ENCODE measurements at regions of chr6 and their contacts with region 1.

Region 1: DNA sequence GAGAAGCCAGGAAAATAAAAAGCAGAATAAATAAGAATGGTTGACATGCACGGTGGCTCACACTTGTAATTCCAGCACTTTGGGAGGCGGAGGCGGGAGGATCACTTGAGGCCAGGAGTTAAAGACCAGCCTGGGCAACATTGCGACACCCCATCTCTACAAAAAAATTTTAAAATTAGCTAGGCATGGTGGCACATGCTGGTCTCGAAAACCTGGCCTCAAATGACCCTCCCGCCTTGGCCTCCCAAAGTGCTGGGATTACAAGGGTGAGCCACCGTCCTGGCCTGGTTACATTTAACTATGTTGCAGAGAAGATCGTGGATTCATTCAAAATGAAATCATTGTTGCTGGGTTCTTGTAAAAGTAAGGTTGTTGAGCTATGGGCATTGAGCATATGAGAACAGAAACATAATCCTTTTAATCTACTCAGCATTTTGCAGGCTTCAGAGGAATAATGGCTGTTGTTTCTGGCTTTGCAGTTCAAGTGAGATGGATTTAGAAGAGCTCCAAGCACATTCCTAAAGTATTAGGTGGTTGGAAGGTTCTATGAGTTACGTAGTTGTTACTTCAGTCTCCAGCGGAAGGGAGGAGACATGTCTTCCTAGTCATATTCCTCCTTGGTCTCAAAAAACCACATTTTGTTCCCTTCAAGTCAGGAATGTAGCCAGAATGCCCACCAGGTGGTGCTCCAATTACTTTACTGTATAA is 45.6 kb upstream of the RAB23 start:
- DNase-seq: peak; percentile 91
- H3K4me3 Mint-ChIP-seq: peak overlapping the region; percentile 45
- H3K27ac Mint-ChIP-seq: peak overlapping the region; percentile 66
- H3K4me1 Mint-ChIP-seq: peaks cover 16% of the 10 kb centered on the region
- H3K27me3 Mint-ChIP-seq: no peaks in the 10 kb centered on the region
- CTCF ChIP-seq: peak; percentile 49

Region 2: DNA sequence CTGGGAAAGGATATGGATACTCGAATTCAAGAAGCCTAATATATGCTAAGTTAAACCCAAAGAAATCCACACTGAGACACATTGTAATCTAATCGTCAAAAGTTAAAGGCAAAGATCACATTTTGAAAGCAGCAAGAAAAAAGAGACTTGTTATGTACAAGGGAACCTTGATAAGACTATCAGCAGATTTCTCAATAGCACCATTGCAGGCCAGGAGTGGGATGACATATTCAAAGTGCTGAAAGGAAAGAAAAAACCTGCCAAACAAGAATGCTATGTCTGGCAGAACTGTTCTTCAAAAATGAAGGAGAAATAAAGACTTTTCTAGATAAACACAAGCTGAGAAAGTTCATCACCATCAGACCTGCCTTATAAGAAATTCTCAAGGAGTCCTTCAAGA is 1095.6 kb before region 1 on chr6:
- CTCF ChIA-PET with region 1: no interaction called
- POLR2A ChIA-PET with region 1: no interaction called
- intact Hi-C with region 1: no loop called
- DNase-seq: no peak
- H3K4me3 Mint-ChIP-seq: no peak overlapping the region
- H3K27ac Mint-ChIP-seq: no peak overlapping the region
- H3K4me1 Mint-ChIP-seq: peaks cover 11% of the 10 kb centered on the region
- H3K27me3 Mint-ChIP-seq: no peaks in the 10 kb centered on the region
- CTCF ChIP-seq: no peak

Region 3: GRCh38 chr6:57172136-57173055 is 95.3 kb before region 1 on chr6 and contains the start of gene BAG2:
- CTCF ChIA-PET with region 1: no interaction called
- POLR2A ChIA-PET with region 1: interaction called, 5 read pairs
- intact Hi-C with region 1: loop called (anchors 5 kb)
- DNase-seq: peak; percentile 85
- H3K4me3 Mint-ChIP-seq: peak within 1 kb of the TSS; percentile 91
- H3K27ac Mint-ChIP-seq: peak within 1 kb of the TSS; percentile 28
- H3K4me1 Mint-ChIP-seq: peaks cover 13% of the 10 kb centered on the region
- H3K27me3 Mint-ChIP-seq: no peaks in the 10 kb centered on the region
- CTCF ChIP-seq: no peak
- total RNA-seq, gene BAG2: 3.6 and 4.2 TPM in 2 replicates

Region 4: DNA sequence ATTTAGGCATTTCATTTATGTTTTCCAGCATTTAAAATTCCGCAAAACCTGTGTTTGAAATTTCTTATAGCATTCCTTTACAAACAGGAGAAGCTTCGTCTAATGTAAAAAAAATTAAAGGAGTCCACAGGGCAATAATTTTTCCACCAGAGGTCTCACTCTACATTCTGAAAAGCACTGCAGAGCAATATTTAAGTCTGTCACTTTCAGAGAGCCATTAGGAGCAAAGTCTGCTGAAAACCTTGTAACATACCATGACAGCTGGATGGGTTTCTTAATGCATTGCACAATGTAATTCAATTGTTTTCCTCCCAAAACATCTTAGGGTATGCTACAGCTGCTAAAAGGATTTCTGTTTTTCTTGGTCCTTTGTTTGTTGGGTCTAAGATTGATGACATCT is 77.6 kb before region 1 on chr6:
- CTCF ChIA-PET with region 1: no interaction called
- POLR2A ChIA-PET with region 1: interaction called, 4 read pairs
- intact Hi-C with region 1: loop called (anchors 5 kb)
- DNase-seq: peak; percentile 17
- H3K4me3 Mint-ChIP-seq: no peak overlapping the region
- H3K27ac Mint-ChIP-seq: no peak overlapping the region
- H3K4me1 Mint-ChIP-seq: no peaks in the 10 kb centered on the region
- H3K27me3 Mint-ChIP-seq: no peaks in the 10 kb centered on the region
- CTCF ChIP-seq: no peak

Region 5: DNA sequence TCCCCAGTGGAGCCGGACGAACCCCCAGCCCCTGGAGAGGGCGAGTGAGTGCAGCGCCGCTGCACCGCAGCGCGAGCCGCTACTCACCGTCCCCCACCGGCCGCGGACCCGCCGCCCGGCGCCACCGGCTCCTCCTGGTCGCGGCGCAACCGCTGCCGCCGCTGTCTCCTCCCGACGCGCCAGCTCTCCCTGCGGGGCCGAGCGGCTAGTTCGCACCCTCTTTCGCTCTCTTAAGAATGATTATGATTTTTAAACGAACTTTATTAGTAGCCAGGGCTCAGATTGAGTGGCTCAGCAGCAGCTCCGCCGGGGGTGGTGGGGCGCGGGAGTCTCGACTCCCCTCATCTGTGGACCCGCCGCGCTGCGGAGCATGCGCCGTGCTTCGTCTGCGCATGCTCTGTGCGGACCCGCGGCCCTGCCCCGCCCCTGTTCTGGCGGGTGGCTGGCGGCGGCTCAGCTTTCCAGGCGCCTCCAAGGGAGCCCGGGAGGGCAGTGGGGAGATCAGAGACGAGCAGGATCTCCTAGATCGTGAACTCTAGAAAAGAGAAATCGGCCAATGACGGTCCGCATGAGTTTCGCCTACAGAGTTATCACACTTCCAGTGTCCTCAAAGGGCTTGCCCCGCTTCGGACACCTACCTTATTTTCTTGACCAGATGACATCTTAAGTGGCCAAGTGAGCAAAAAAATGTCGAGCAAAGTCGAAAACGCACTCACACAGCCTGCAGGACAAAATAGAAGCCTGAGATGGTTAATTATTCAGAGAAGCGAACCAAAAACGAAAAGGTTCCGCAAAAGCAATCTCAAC is 45.6 kb before region 1 on chr6 and contains the start of gene RAB23:
- CTCF ChIA-PET with region 1: no interaction called
- POLR2A ChIA-PET with region 1: interaction called, 10 read pairs
- intact Hi-C with region 1: loop called (anchors 2 kb)
- DNase-seq: peak; percentile 83
- H3K4me3 Mint-ChIP-seq: peak within 1 kb of the TSS; percentile 84
- H3K27ac Mint-ChIP-seq: peak within 1 kb of the TSS; percentile 56
- H3K4me1 Mint-ChIP-seq: peaks cover 31% of the 10 kb centered on the region
- H3K27me3 Mint-ChIP-seq: no peaks in the 10 kb centered on the region
- CTCF ChIP-seq: no peak
- total RNA-seq, gene RAB23: 8.4 and 13.3 TPM in 2 replicates

Measured in MCF 10A (cell line).